Aorta (tissue), 5 donors: ENCODE measurements at regions of chrX and their contacts with region 1.

Region 1: GRCh38 chrX:57587607-57588006 is 4.2 kb upstream of the ZXDB start:
- DNase-seq: no peak
- ATAC-seq: no peak
- H3K4me3 ChIP-seq: no peak overlapping the region
- H3K27ac ChIP-seq: no peak overlapping the region
- H3K4me1 ChIP-seq: no peaks in the 10 kb centered on the region
- H3K27me3 ChIP-seq: no peaks in the 10 kb centered on the region

Region 2: DNA sequence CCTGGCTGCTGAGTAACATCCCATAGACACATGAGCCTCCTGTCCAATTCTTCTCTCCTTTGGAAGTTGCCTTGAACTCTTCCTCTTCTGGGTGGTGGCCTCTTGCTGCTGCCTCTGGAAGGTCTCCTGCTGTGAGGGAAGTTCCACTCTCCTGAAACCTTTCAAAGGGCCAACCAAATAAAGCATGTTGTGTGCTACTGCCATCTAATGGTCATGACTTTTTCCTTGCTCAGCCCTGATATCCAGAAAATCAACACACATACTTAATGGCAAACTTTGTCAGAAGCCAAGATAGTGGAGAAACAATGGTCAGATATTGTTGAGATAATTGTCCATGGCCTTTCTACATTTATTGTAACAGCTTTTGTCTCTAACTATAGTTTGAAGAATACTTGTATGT is 341.8 kb after region 1 on chrX:
- intact Hi-C with region 1: loop called in 1 of 2 experiments (anchors 10 kb)
- DNase-seq: no peak
- ATAC-seq: no peak
- H3K4me3 ChIP-seq: no peak overlapping the region
- H3K27ac ChIP-seq: no peak overlapping the region
- H3K4me1 ChIP-seq: no peaks in the 10 kb centered on the region
- H3K27me3 ChIP-seq: no peaks in the 10 kb centered on the region